Activated T-helper 2 cell treated with anti-CD3 and anti-CD28 coated beads, Interferon-gamma antibody, Interleukin-2, Interleukin-4, amounts not matched to agents 10 μg/mL and 5 μg/mL and 100 μg/mL, durations not matched to agents 14 hours and 24 hours and 36 hours (primary cell): ENCODE measurements at regions of chr10 and their contacts with region 1.

Region 1: GRCh38 chr10:88901206-88901983 is 21.4 kb downstream of the STAMBPL1 start:
- DNase-seq: no peak
- H3K4me3 Mint-ChIP-seq: peak overlapping the region; percentile 51
- H3K27ac Mint-ChIP-seq: peak overlapping the region; percentile 87
- H3K4me1 Mint-ChIP-seq: peaks cover 60% of the 10 kb centered on the region
- H3K27me3 Mint-ChIP-seq: no peaks in the 10 kb centered on the region

Region 2: GRCh38 chr10:88544130-88544870 is 357.1 kb before region 1 on chr10:
- intact Hi-C with region 1: no loop called
- DNase-seq: no peak
- H3K4me3 Mint-ChIP-seq: no peak overlapping the region
- H3K27ac Mint-ChIP-seq: no peak overlapping the region
- H3K4me1 Mint-ChIP-seq: peaks cover 24% of the 10 kb centered on the region
- H3K27me3 Mint-ChIP-seq: peaks cover 15% of the 10 kb centered on the region

Region 3: DNA sequence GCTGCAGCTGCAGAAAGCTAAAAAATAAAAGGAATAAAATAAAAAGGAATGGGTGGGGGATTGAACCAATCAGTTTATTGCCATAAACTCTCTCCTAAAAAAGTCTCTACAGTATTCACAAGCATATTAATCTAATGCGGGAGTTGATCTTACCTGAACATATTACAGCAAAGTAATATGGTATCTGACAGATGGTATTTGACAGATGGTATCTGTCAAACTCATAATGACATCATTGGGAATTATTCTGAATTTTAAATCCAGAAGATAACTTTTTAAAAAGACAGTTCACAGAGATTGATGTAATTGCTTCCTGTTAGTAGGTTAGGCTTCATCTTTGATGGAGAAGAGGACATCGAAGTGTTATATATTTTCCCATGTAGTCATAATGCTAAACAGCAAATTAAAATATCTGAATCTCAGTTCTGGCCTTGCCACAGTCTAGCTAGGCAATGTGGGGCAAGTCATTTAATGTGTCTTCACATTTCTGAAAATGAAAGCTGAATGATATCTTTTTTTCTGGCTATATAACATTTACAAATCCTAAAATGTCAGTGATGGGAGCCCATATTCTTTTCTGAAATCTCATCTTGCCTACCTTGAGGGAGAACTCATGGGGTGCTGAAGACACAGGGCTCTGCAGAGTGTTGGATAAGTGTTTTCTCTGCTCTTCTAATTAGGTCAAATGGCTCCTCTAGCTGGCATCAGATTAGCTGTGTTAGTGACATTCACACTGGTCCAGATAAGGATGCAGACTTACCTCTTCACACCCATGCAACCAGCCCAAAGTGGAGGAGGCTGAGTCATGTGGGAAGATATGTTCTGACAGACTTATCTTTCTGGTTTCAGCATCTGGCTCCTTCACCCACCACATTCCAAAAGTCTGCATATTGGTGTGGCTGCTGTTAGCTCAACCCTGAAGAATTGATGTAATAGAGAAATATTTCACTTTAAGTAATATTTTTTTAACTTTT is 101.0 kb before region 1 on chr10:
- intact Hi-C with region 1: loop called (anchors 1 kb)
- DNase-seq: no peak
- H3K4me3 Mint-ChIP-seq: no peak overlapping the region
- H3K27ac Mint-ChIP-seq: peak overlapping the region; percentile 33
- H3K4me1 Mint-ChIP-seq: peaks cover 28% of the 10 kb centered on the region
- H3K27me3 Mint-ChIP-seq: peaks cover 40% of the 10 kb centered on the region

Region 4: GRCh38 chr10:88835096-88835909 is 66.1 kb before region 1 on chr10:
- intact Hi-C with region 1: loop called (anchors 2 kb)
- DNase-seq: peak; percentile 78
- H3K4me3 Mint-ChIP-seq: no peak overlapping the region
- H3K27ac Mint-ChIP-seq: no peak overlapping the region
- H3K4me1 Mint-ChIP-seq: peaks cover 35% of the 10 kb centered on the region
- H3K27me3 Mint-ChIP-seq: no peaks in the 10 kb centered on the region

Region 5: DNA sequence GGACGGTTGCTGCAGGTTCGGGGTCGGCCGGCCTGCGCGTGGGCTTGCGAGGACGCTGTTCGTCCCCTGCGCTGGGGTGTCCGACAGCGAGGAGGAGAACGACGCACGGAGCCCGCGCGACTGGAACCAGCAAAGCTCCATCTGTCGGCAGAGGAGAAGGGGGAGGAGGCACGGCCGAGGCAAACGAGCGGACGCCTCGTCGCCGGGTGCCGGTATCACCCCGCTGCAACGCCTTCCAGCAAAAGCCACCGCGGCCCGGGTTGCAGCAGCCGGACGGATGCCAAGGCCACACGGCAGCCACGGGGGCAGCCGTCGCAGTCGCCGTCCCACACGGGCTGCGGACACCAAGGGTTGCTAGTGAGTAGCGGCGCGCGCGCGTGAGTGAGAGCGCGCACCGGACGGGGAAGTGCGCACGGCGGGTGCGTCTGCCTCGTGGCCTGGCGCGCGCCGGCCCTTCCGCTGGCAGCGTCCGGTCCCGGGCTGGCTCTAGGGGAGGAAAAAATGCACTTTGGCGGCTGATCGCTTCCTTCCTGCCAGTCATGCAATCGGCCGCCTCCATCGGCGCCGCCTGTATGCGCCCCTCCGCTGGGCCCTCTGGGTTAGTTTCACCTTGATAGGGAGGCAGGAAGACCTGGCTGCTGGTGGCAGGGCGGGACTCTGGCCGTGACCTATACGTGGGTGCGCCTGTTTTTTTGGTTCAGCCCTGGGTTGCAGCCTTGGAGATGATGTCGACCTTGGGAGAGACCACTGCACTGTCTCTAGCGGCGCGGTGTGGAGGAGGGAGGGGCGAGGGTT is 20.9 kb before region 1 on chr10:
- intact Hi-C with region 1: loop called (anchors 1 kb)
- DNase-seq: peak; percentile 79
- H3K4me3 Mint-ChIP-seq: peak overlapping the region; percentile 97
- H3K27ac Mint-ChIP-seq: peak overlapping the region; percentile 98
- H3K4me1 Mint-ChIP-seq: peaks cover 59% of the 10 kb centered on the region
- H3K27me3 Mint-ChIP-seq: no peaks in the 10 kb centered on the region

Region 6: GRCh38 chr10:88932539-88933256 is 31.3 kb after region 1 on chr10:
- intact Hi-C with region 1: no loop called
- DNase-seq: peak; percentile 27
- H3K4me3 Mint-ChIP-seq: no peak overlapping the region
- H3K27ac Mint-ChIP-seq: no peak overlapping the region
- H3K4me1 Mint-ChIP-seq: peaks cover 27% of the 10 kb centered on the region
- H3K27me3 Mint-ChIP-seq: no peaks in the 10 kb centered on the region

Region 7: DNA sequence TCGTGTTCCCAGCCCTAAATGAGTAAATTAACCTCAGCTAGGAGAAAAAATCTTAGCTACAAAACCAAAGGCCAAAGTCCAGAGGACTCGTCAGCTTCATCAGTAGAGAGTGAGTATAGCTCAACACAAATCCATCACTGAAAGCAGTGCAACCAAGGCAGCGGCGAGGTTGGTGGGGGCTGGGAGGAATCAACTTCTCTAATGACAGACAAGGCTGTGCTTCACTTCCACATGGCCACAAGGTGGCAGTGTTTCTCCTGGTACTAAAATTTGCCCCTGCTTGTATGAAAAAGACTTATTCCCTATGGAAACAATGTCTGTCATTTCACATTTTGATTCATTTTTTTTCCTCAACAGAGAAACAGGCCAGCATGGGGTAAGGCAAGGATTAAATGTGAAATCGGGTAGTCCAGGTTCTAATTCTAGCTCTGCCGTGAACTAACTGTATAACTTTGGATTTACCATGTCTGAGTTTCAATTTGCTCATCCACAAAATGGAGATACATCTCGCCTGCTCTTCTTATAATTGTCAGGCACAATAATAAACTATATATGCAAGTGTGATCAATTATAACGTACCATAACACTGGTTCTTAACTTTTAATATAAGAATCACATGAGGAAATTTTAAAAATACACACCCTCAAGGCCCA is 128.5 kb after region 1 on chr10:
- intact Hi-C with region 1: loop called (anchors 1 kb)
- DNase-seq: peak; percentile 48
- H3K4me3 Mint-ChIP-seq: no peak overlapping the region
- H3K27ac Mint-ChIP-seq: no peak overlapping the region
- H3K4me1 Mint-ChIP-seq: peaks cover 38% of the 10 kb centered on the region
- H3K27me3 Mint-ChIP-seq: no peaks in the 10 kb centered on the region